Calu3 (cell line): ENCODE measurements at regions of chr5 and their contacts with region 1.

Region 1: GRCh38 chr5:82364497-82364896 is 86.3 kb upstream of the RPS23 start:
- DNase-seq: peak; percentile 53
- H3K4me3 Mint-ChIP-seq: no peak overlapping the region
- H3K27ac Mint-ChIP-seq: peak overlapping the region; percentile 87
- H3K4me1 Mint-ChIP-seq: peaks cover 23% of the 10 kb centered on the region
- H3K27me3 Mint-ChIP-seq: no peaks in the 10 kb centered on the region
- CTCF ChIP-seq: peak; percentile 55

Region 2: DNA sequence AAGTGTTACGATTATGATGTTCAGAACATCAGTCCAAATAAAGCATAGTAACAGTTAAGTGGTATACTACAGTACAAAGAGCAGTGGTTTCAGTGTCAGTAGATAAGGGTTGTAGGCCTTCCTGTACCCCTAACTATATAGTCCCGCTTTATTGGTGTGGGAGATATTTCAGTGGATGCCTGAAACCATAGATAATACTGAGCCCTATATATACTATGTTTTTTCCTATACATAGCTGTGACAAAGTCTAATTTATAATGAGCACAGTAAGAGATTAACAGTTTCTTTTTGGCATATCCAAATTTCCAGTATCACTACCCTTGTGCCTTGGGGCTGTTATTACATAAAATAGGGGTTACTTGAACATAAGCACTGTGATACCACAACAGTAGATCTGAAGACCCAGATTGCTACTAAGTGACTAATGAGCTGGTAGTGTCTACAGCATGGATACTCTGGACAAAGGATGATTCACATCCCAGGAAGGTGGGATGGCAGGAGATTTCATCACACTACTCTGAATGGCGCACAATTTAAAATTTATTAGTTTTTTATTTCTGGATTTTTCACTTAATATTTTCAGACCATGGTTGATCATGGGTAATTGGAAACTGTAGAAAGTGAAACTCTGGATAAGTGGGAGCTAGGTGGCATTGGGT is 205.6 kb before region 1 on chr5:
- CTCF ChIA-PET with region 1: no interaction called
- intact Hi-C with region 1: no loop called
- DNase-seq: no peak
- H3K4me3 Mint-ChIP-seq: no peak overlapping the region
- H3K27ac Mint-ChIP-seq: peak overlapping the region; percentile 1
- H3K4me1 Mint-ChIP-seq: peaks cover 38% of the 10 kb centered on the region
- H3K27me3 Mint-ChIP-seq: no peaks in the 10 kb centered on the region
- CTCF ChIP-seq: no peak

Region 3: DNA sequence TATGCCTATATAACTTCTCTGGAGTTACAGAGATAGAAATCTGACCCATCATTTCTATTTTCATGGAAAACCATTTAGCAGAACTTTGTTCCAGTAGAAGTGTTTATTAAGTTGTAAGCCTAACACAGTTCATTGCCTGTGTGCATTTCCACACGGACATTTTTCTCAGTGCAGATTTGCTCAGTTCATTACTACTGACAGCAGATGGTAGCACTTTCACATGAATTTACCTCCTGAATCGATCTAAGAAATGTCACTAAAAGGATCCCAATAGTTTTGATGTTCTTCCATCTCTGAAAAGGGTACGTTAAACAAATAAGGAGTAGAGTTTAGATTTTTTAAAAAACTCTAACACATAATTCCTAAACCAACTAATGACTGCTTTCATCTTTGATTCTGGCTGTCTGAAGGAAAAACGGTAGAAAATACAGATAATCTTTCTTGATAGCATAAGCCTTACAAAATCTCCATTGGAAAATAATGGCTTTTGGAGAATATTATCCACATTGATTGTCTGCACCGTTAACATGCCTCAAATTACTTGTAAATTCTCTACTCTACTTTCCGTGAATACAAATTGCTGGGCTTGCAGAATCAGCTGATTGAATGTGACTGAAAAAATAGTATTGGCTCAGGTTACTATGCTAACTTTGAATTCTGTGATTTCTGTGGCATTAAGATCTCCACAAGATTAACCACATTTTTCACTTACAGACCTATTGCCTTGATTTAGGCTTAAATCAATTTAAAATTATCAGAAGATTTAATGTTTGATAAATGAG is 119.5 kb before region 1 on chr5:
- CTCF ChIA-PET with region 1: no interaction called
- intact Hi-C with region 1: no loop called
- DNase-seq: no peak
- H3K4me3 Mint-ChIP-seq: no peak overlapping the region
- H3K27ac Mint-ChIP-seq: no peak overlapping the region
- H3K4me1 Mint-ChIP-seq: no peaks in the 10 kb centered on the region
- H3K27me3 Mint-ChIP-seq: no peaks in the 10 kb centered on the region
- CTCF ChIP-seq: no peak

Region 4: GRCh38 chr5:82421119-82421518 is 56.6 kb after region 1 on chr5:
- CTCF ChIA-PET with region 1: no interaction called
- intact Hi-C with region 1: loop called (anchors 2 kb)
- DNase-seq: peak; percentile 68
- H3K4me3 Mint-ChIP-seq: peak overlapping the region; percentile 19
- H3K27ac Mint-ChIP-seq: peak overlapping the region; percentile 75
- H3K4me1 Mint-ChIP-seq: peaks cover 77% of the 10 kb centered on the region
- H3K27me3 Mint-ChIP-seq: no peaks in the 10 kb centered on the region
- CTCF ChIP-seq: no peak

Region 5: GRCh38 chr5:82635561-82636288 is 271.2 kb after region 1 on chr5:
- CTCF ChIA-PET with region 1: interaction called, 4 read pairs
- intact Hi-C with region 1: loop called (anchors 1 kb)
- DNase-seq: peak; percentile 72
- H3K4me3 Mint-ChIP-seq: no peak overlapping the region
- H3K27ac Mint-ChIP-seq: peak overlapping the region; percentile 81
- H3K4me1 Mint-ChIP-seq: peaks cover 61% of the 10 kb centered on the region
- H3K27me3 Mint-ChIP-seq: no peaks in the 10 kb centered on the region
- CTCF ChIP-seq: no peak

Region 6: GRCh38 chr5:82656341-82656761 is 291.9 kb after region 1 on chr5:
- CTCF ChIA-PET with region 1: no interaction called
- intact Hi-C with region 1: no loop called
- DNase-seq: no peak
- H3K4me3 Mint-ChIP-seq: no peak overlapping the region
- H3K27ac Mint-ChIP-seq: no peak overlapping the region
- H3K4me1 Mint-ChIP-seq: no peaks in the 10 kb centered on the region
- H3K27me3 Mint-ChIP-seq: no peaks in the 10 kb centered on the region
- CTCF ChIP-seq: no peak

Region 7: DNA sequence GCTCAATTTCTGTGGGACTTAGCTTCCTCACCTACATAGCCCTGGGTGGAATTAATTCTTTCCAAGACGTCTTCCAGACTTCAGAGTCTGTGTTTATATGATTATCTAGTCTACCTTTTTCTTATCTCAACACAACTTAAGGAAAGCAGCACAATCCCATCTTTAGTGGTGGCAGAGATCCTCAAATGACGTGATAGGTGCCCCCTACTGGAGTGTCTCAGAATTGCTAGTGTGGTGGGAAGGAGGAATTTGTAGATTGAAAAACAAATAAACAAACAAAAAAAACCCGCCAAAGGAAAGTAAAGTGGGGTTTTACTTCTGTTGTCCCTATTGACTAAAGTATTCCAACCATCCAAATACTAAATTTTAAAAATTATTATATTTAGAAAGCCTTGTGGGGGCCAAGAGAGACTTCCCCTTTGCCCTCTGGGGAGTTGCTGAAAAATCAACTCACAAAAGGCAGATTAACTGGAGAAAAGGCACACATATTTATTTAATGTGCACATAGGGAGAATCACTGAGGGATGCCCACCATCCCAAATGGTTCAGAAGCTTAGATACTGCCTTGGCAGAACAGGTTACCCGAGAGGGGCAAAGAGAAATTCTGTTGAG is 429.4 kb after region 1 on chr5:
- CTCF ChIA-PET with region 1: no interaction called
- intact Hi-C with region 1: loop called (anchors 5 kb)
- DNase-seq: peak; percentile 60
- H3K4me3 Mint-ChIP-seq: no peak overlapping the region
- H3K27ac Mint-ChIP-seq: no peak overlapping the region
- H3K4me1 Mint-ChIP-seq: no peaks in the 10 kb centered on the region
- H3K27me3 Mint-ChIP-seq: no peaks in the 10 kb centered on the region
- CTCF ChIP-seq: peak; percentile 65